ENCODE measurements at regions of chr2 and their contacts with region 1.

Region 1: GRCh38 chr2:120174963-120175581 is 48.1 kb downstream of the TMEM185B start:
- DNase-seq: peak; percentile 25
- ATAC-seq: 0 out of 2 replicates have a peak, but pooled peaks have one; percentile 67
- H3K4me3 ChIP-seq: no peak overlapping the region
- H3K27ac ChIP-seq: no peak overlapping the region
- H3K4me1 ChIP-seq: no peaks in the 10 kb centered on the region
- H3K27me3 ChIP-seq: no peaks in the 10 kb centered on the region
- CTCF ChIP-seq: peak; percentile 80

Region 2: DNA sequence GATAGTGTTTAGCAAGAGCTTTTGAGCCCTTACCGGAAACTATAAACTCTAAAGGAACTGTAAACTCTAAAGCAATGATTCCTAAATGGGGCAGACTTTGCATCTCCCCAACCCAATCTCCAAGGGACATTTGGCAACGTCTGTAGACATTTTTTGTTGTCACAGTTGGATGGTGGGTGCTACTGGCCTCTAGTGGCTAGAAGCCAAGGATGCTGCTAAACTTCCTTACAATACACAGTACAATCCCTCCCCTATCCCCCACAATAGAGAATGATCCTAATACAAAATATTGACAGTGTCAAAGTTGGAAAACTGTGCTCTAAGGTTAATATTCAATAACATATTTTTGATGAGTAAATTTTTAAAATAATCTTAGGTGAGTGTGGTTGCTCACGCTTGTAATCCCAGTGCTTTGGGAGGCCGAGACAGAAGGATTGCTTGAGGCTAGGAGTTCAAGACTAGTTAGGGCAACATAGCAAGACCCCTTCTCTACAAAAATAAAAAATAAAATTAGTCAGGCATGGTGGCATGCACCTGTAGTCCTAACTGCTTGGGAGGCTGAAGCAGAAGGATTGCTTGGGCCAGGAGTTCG is 348.6 kb before region 1 on chr2:
- CTCF ChIA-PET with region 1: no interaction called
- POLR2A ChIA-PET with region 1: no interaction called
- in situ Hi-C with region 1: no loop called
- intact Hi-C with region 1: loop called (anchors 10 kb)
- DNase-seq: no peak
- ATAC-seq: peak; percentile 89
- H3K4me3 ChIP-seq: no peak overlapping the region
- H3K27ac ChIP-seq: no peak overlapping the region
- H3K4me1 ChIP-seq: peaks cover 3% of the 10 kb centered on the region; the same call in 1 of the 2 replicates
- H3K27me3 ChIP-seq: no peaks in the 10 kb centered on the region
- CTCF ChIP-seq: peak; percentile 79

Region 3: GRCh38 chr2:120109186-120110061 is 65.6 kb before region 1 on chr2:
- CTCF ChIA-PET with region 1: interaction called, 11 read pairs
- POLR2A ChIA-PET with region 1: no interaction called
- in situ Hi-C with region 1: no loop called
- intact Hi-C with region 1: loop called (anchors 5 kb)
- DNase-seq: no peak
- ATAC-seq: 0 out of 2 replicates have a peak, but pooled peaks have one; percentile 53
- H3K4me3 ChIP-seq: no peak overlapping the region
- H3K27ac ChIP-seq: no peak overlapping the region; the same call in 1 of the 2 replicates
- H3K4me1 ChIP-seq: peaks cover 8% of the 10 kb centered on the region
- H3K27me3 ChIP-seq: no peaks in the 10 kb centered on the region
- CTCF ChIP-seq: peak; percentile 55; the same call in 1 of the 2 replicates

Region 4: GRCh38 chr2:120161190-120161589 is 13.9 kb before region 1 on chr2:
- CTCF ChIA-PET with region 1: interaction called, 10 read pairs
- POLR2A ChIA-PET with region 1: no interaction called
- in situ Hi-C with region 1: no loop called
- intact Hi-C with region 1: no loop called
- DNase-seq: no peak
- ATAC-seq: no peak
- H3K4me3 ChIP-seq: no peak overlapping the region
- H3K27ac ChIP-seq: no peak overlapping the region
- H3K4me1 ChIP-seq: no peaks in the 10 kb centered on the region
- H3K27me3 ChIP-seq: no peaks in the 10 kb centered on the region
- CTCF ChIP-seq: no peak